ENCODE measurements at regions of chr6 and their contacts with region 1.

Region 1: DNA sequence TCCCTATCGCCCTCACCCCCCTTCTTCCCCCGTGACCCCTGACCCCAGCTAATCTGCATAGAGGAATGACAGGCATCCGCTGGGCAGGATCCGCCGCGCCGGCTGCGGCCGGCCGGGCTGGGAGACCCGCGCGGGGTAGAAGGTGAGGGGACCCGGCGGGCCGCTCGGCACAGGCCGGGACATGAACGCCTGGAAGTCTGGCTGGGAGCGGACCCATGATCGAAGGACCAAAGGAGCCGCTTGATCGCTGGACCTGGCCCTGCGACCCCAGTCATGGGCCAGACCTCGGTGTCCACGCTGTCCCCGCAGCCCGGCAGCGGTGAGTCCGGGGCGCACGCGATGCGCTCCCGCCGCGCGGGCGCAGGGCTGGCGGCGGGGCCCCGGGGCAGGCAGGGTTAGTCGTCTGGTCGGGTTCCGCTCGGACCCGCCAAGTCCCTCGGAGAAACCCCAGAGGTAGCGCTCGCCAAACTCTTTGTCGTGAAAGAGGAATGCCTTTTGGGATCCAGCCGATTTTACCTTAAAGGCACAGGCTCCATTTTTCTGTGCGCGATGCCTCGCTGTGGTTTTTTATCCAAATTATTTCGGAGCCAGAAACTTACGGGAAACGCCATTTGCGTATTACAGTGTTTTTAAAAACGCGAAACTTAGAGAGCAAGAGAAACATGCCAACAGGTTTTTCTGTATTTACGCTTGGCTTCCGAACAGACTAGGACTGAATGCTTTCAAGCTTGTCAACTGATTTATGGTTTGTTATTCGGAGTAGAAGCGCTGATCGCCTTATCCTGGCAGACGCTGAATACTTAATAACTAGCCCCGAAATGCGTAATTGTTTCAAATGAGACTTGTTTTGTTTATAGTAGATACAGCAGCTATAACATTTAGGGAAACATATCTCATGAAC is at the start of gene PHACTR2:
- DNase-seq: peak; percentile 74 to 92 (median 82)
- ATAC-seq: peak; percentile 96
- H3K4me3 ChIP-seq: peak within 1 kb of the TSS; percentile 76
- H3K27ac ChIP-seq: peak within 1 kb of the TSS; percentile 75
- H3K4me1 ChIP-seq: peaks cover 5% of the 10 kb centered on the region in 2 experiments; a peak in 2 of 5 replicates
- H3K27me3 ChIP-seq: no peaks in the 10 kb centered on the region
- CTCF ChIP-seq: no peak
- EP300 ChIP-seq: no peak
- POLR2A ChIP-seq: peak; percentile 83
- RAD21 ChIP-seq: peak in 1 of 2 experiments; percentile 25; a peak in 2 of 4 replicates
- polyA plus RNA-seq, gene PHACTR2: 5.3 to 13.9 TPM

Region 2: DNA sequence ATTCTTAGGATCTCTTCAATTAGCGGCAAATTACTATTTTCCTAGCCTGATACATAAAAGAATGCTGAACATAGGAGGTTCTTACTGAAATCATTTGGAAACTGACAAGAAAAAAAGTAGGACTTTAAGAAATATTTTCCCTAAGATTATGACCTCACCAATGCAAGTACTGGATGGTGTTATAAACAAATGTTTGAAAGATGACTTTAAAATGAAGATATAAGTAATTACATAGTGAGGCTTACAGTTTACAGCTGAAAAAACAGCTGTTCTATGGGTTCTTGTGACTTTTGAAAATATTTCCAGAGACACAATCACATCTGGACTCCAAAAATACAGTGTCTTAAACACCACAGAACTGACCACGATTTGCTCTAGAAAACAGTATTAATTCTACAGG is 292.5 kb before region 1 on chr6:
- CTCF ChIA-PET with region 1: no interaction called
- POLR2A ChIA-PET with region 1: no interaction called
- in situ Hi-C with region 1: no loop called
- intact Hi-C with region 1: no loop called
- DNase-seq: no peak
- ATAC-seq: no peak
- H3K4me3 ChIP-seq: no peak overlapping the region
- H3K27ac ChIP-seq: no peak overlapping the region
- H3K4me1 ChIP-seq: no peaks in the 10 kb centered on the region
- H3K27me3 ChIP-seq: peaks cover 24 to 34% of the 10 kb centered on the region in 2 experiments; a peak in 4 of 5 replicates
- CTCF ChIP-seq: no peak
- EP300 ChIP-seq: no peak
- POLR2A ChIP-seq: no peak
- RAD21 ChIP-seq: no peak

Region 3: GRCh38 chr6:143806282-143807102 is 128.4 kb after region 1 on chr6:
- CTCF ChIA-PET with region 1: no interaction called
- POLR2A ChIA-PET with region 1: no interaction called
- in situ Hi-C with region 1: no loop called
- intact Hi-C with region 1: loop called (anchors 5 kb)
- DNase-seq: peak; percentile 76 to 95 (median 85)
- ATAC-seq: peak; percentile 81
- H3K4me3 ChIP-seq: no peak overlapping the region
- H3K27ac ChIP-seq: peak overlapping the region; percentile 84
- H3K4me1 ChIP-seq: peaks cover 47 to 52% of the 10 kb centered on the region in 2 experiments
- H3K27me3 ChIP-seq: no peaks in the 10 kb centered on the region
- CTCF ChIP-seq: no peak
- EP300 ChIP-seq: peak; percentile 95
- POLR2A ChIP-seq: no peak
- RAD21 ChIP-seq: peak; percentile 6 to 20; a peak in 2 of 4 replicates

Region 4: DNA sequence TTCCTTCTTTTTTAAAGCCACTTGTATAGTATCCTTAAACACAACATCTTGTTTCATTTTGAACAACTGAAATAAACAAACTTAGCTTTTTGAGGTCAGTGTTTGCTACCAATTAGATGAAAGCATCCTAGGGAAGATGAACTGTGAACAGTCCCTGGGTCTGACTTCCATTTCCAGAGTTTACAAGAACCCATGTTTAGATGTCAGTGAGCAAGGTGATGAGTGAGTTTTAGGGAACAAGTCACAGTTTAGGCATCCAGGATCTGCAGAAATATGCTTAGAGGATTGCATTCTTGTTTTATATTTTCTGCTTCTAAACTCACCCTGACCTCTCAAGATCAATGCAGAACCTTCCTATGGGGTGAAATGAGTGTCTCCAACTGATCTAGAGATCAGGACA is 189.1 kb after region 1 on chr6:
- CTCF ChIA-PET with region 1: no interaction called
- POLR2A ChIA-PET with region 1: interaction called, 11 read pairs
- in situ Hi-C with region 1: no loop called
- intact Hi-C with region 1: no loop called
- DNase-seq: no peak
- ATAC-seq: no peak
- H3K4me3 ChIP-seq: no peak overlapping the region
- H3K27ac ChIP-seq: no peak overlapping the region
- H3K4me1 ChIP-seq: no peaks in the 10 kb centered on the region
- H3K27me3 ChIP-seq: no peaks in the 10 kb centered on the region
- CTCF ChIP-seq: no peak
- EP300 ChIP-seq: no peak
- POLR2A ChIP-seq: no peak
- RAD21 ChIP-seq: no peak

Measured in K562 (cell line).